ENCODE measurements at regions of chr17 and their contacts with region 1.

Region 1: GRCh38 chr17:12744298-12744697 is 45.0 kb upstream of the ARHGAP44 start:
- DNase-seq: no peak
- ATAC-seq: no peak
- H3K4me3 Mint-ChIP-seq: no peak overlapping the region
- H3K27ac Mint-ChIP-seq: no peak overlapping the region
- H3K4me1 Mint-ChIP-seq: peaks cover 22% of the 10 kb centered on the region
- H3K27me3 Mint-ChIP-seq: no peaks in the 10 kb centered on the region
- CTCF ChIP-seq: no peak

Region 2: DNA sequence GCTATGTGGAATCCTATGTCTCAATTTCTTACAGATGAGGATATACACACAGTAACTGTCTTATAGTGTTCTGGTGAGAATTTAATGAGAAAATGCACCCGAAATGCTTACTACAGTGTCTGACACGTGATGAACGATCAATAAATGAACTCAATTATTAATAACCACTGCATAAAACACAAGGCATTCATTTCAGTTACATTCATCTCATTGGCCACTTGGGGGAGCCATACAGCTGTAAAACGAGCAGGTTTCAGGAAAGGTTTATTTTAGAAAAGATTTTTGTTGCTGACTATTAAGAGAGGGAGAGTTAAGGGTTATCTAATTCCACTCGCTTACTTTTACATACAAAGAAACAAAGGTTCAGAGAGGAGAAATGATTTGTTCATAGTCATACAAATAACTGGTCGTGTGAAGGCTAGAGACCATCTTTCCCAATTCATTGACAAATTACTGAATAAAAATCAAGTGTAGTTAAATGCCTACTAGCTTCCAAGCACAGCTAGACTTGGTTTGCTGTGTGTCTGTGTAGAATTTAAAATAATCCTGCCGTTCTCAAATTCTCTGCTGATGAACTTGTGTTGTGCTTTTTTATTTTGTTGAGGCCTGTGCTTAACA is 563.5 kb before region 1 on chr17:
- CTCF ChIA-PET with region 1: interaction called, 16 read pairs
- POLR2A ChIA-PET with region 1: no interaction called
- DNase-seq: peak; percentile 16
- ATAC-seq: no peak
- H3K4me3 Mint-ChIP-seq: no peak overlapping the region
- H3K27ac Mint-ChIP-seq: no peak overlapping the region
- H3K4me1 Mint-ChIP-seq: no peaks in the 10 kb centered on the region
- H3K27me3 Mint-ChIP-seq: no peaks in the 10 kb centered on the region
- CTCF ChIP-seq: peak; percentile 60; the same call in 1 of the 2 replicates

Region 3: GRCh38 chr17:12342609-12343435 is 401.5 kb before region 1 on chr17:
- CTCF ChIA-PET with region 1: interaction called, 32 read pairs
- POLR2A ChIA-PET with region 1: no interaction called
- DNase-seq: peak; percentile 89
- ATAC-seq: peak; percentile 90
- H3K4me3 Mint-ChIP-seq: no peak overlapping the region
- H3K27ac Mint-ChIP-seq: no peak overlapping the region
- H3K4me1 Mint-ChIP-seq: peaks cover 15% of the 10 kb centered on the region
- H3K27me3 Mint-ChIP-seq: no peaks in the 10 kb centered on the region
- CTCF ChIP-seq: peak; percentile 86

Region 4: DNA sequence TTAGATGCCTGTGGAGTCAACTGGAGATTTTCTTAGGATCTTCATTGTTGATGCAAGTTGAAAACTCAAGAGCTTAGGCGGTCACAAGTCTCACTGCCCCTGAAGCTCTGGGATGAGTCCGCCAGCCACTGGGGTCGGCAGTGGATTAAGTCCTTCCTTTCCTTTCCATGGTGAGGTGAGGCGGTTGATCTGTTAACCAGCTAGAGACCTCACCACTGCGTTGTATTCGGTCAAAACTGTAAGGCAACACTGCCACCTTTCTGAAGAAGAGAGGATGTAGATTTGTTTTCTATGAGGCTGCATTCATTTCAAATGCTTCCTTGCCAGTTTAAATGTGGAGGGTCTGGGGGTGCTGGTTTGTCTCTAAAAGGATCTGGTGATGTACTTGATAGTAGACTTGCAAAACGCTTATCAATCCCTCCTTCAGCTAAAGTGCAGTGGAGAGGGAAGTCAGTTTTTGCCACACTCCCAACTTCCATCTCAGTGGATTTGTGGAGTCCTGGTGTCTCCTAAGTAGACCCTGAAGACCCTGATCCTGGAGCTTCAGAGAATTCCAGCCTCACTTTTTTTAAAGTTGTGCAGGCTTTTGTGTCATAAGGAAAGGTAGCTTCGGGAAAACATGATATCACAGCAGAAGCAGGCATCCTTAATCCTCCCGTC is 76.9 kb before region 1 on chr17:
- CTCF ChIA-PET with region 1: interaction called, 58 read pairs
- POLR2A ChIA-PET with region 1: no interaction called
- DNase-seq: peak; percentile 42
- ATAC-seq: peak; percentile 43
- H3K4me3 Mint-ChIP-seq: peak overlapping the region; percentile 20; the same call in 1 of the 2 replicates
- H3K27ac Mint-ChIP-seq: no peak overlapping the region
- H3K4me1 Mint-ChIP-seq: peaks cover 10% of the 10 kb centered on the region; the same call in 1 of the 2 replicates
- H3K27me3 Mint-ChIP-seq: peaks cover 39% of the 10 kb centered on the region
- CTCF ChIP-seq: peak; percentile 23; the same call in 1 of the 2 replicates

Region 5: DNA sequence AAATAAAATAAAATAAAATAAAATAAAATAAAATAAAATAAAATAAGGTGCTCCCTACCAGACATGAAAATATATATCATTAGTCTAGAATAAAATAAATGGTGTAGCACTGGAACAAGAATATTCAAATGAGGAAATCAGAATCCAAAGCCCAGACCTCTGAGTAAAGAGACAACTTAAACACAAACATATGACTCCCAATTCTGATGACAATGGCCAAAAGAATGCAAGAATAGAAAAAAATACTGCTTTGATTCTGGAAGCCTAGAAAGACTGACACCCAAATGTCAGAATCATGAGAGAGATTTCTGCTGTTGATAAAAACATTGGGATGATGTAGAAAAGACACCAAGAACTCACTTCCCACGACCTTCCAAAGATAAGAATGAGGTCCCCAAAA is 50.7 kb before region 1 on chr17:
- CTCF ChIA-PET with region 1: interaction called, 11 read pairs
- POLR2A ChIA-PET with region 1: no interaction called
- DNase-seq: no peak
- ATAC-seq: no peak
- H3K4me3 Mint-ChIP-seq: no peak overlapping the region
- H3K27ac Mint-ChIP-seq: no peak overlapping the region
- H3K4me1 Mint-ChIP-seq: no peaks in the 10 kb centered on the region
- H3K27me3 Mint-ChIP-seq: no peaks in the 10 kb centered on the region; the same call in 1 of the 2 replicates
- CTCF ChIP-seq: no peak

Region 6: GRCh38 chr17:12719948-12720347 is 24.4 kb before region 1 on chr17:
- CTCF ChIA-PET with region 1: interaction called, 16 read pairs
- POLR2A ChIA-PET with region 1: interaction called, 3 read pairs
- DNase-seq: peak; percentile 41
- ATAC-seq: peak; percentile 67
- H3K4me3 Mint-ChIP-seq: no peak overlapping the region
- H3K27ac Mint-ChIP-seq: no peak overlapping the region; the same call in 1 of the 2 replicates
- H3K4me1 Mint-ChIP-seq: peaks cover 36% of the 10 kb centered on the region
- H3K27me3 Mint-ChIP-seq: no peaks in the 10 kb centered on the region
- CTCF ChIP-seq: no peak

Region 7: GRCh38 chr17:12789075-12789776 is 44.9 kb after region 1 on chr17 and contains the start of gene ARHGAP44:
- CTCF ChIA-PET with region 1: interaction called, 10 read pairs
- POLR2A ChIA-PET with region 1: no interaction called
- DNase-seq: peak; percentile 85
- ATAC-seq: peak; percentile 91
- H3K4me3 Mint-ChIP-seq: peak within 1 kb of the TSS; percentile 95
- H3K27ac Mint-ChIP-seq: peak within 1 kb of the TSS; percentile 75
- H3K4me1 Mint-ChIP-seq: peaks cover 22% of the 10 kb centered on the region
- H3K27me3 Mint-ChIP-seq: peaks cover 13% of the 10 kb centered on the region
- CTCF ChIP-seq: no peak
- total RNA-seq, gene ARHGAP44: 22.7 to 23.8 TPM (median 22.8 TPM) in 3 replicates

Region 8: DNA sequence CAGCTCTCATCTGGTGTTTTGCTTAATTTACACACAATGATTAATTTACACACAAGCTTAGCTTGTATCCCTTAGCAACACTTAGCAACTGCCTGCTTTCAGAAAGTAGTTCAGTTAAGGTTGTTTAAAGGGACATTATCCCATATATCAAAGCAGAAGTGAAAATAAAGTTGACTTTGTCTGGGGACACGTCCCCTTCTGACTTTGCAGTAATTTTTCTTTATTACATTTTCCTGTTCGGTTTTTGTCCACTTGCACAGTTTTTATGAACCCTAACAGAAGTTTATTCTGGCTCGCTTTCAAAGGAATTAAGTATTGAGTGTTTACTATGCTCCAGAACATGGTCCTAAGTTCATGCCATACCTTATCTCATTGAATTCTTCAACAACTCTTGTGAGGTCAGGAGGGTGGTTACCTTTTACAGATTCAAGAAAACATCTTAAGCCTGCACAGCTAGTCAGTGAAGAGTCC is 86.5 kb after region 1 on chr17:
- CTCF ChIA-PET with region 1: no interaction called
- POLR2A ChIA-PET with region 1: no interaction called
- DNase-seq: no peak
- ATAC-seq: no peak
- H3K4me3 Mint-ChIP-seq: no peak overlapping the region
- H3K27ac Mint-ChIP-seq: no peak overlapping the region
- H3K4me1 Mint-ChIP-seq: no peaks in the 10 kb centered on the region
- H3K27me3 Mint-ChIP-seq: no peaks in the 10 kb centered on the region
- CTCF ChIP-seq: no peak

Region 9: DNA sequence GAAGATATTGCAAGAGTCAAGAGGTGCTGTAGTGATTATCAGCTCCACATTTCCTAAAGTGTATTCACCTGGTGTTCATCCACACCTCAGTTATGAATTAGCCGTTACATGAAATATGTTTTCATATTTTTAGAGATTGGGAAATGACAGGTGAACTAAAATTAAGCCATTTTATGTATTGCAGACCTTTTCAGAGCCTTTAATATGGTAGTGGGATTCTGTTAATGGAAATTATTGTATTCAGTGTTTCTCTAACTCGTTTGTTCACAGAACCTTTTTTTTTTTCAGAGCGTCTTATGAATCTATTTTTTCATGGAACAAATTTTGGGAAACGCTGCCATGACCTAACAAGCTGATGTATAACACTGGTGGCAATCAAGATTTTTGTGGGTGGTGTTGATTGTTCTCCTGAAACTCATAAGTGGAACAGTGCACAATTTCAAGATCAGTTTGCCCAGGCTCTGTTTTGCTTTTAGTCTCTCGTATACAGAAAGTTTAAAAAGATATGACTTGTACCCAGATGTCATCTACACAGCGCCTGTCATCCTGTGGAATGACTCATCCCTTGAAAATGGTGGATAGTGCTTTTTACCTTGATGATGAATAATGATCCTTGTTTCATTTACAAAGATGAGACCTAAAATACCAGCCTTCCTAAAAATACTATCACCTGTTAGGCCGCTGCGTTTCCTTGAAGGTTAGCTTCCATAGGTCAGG is 133.8 kb after region 1 on chr17:
- CTCF ChIA-PET with region 1: no interaction called
- POLR2A ChIA-PET with region 1: no interaction called
- DNase-seq: no peak
- ATAC-seq: no peak
- H3K4me3 Mint-ChIP-seq: no peak overlapping the region
- H3K27ac Mint-ChIP-seq: no peak overlapping the region
- H3K4me1 Mint-ChIP-seq: 0 out of 2 replicates have a peak, but pooled peaks cover 4% of the 10 kb centered on the region
- H3K27me3 Mint-ChIP-seq: no peaks in the 10 kb centered on the region
- CTCF ChIP-seq: no peak

Region 10: DNA sequence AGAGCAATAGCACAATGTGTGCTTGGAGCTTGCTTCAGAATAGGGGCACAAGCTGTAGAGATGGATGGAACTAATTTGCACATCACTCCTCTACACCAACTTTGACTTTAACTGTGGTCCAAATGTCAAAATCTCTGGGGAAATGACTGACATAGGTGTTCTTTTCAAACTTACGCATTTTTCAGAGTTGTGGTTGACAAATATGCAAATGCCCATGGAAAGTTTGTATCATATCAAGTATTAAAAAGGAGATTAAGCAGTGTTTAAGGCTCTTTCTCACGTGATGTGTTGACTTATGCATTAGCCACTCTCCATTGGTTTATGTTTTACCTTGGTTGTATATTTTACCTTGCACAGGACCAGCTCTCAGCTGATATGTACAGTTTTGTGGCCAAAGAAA is 196.4 kb after region 1 on chr17:
- CTCF ChIA-PET with region 1: no interaction called
- POLR2A ChIA-PET with region 1: no interaction called
- DNase-seq: no peak
- ATAC-seq: no peak
- H3K4me3 Mint-ChIP-seq: no peak overlapping the region
- H3K27ac Mint-ChIP-seq: no peak overlapping the region
- H3K4me1 Mint-ChIP-seq: no peaks in the 10 kb centered on the region
- H3K27me3 Mint-ChIP-seq: no peaks in the 10 kb centered on the region
- CTCF ChIP-seq: no peak

Measured in WTC11 (cell line).